Psoas muscle (tissue), 8 donors: ENCODE measurements at regions of chr5 and their contacts with region 1.

Region 1: DNA sequence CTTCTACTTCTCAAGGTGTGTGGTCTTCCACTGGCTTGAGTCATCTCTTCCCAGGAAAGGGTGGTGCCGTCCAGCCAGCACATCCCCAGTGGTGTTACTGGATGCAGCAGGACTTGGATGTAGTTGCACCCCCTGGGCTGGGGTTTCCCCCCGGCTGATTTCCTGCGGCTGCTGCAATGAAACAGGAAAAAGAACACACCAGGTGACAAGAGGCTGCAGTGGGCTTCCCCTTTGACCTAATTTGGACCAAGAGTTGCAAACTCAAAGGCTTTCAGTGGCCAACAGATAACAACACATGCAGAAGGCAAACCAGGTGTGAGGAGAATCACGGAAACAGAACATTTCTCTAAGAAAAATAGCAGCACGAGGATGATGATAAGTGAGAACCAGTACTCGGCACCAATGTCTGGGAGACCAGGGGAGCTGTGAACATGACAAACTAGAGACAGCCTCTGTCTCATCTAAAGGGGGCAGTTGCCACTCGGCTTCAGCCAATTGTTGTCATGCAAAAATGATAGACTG is 83.7 kb downstream of the PDE6A start:
- DNase-seq: no peak
- ATAC-seq: no peak
- H3K4me3 ChIP-seq: no peak overlapping the region
- H3K27ac ChIP-seq: no peak overlapping the region
- H3K4me1 ChIP-seq: peaks cover 19% of the 10 kb centered on the region
- H3K27me3 ChIP-seq: no peaks in the 10 kb centered on the region
- CTCF ChIP-seq: no peak

Region 2: DNA sequence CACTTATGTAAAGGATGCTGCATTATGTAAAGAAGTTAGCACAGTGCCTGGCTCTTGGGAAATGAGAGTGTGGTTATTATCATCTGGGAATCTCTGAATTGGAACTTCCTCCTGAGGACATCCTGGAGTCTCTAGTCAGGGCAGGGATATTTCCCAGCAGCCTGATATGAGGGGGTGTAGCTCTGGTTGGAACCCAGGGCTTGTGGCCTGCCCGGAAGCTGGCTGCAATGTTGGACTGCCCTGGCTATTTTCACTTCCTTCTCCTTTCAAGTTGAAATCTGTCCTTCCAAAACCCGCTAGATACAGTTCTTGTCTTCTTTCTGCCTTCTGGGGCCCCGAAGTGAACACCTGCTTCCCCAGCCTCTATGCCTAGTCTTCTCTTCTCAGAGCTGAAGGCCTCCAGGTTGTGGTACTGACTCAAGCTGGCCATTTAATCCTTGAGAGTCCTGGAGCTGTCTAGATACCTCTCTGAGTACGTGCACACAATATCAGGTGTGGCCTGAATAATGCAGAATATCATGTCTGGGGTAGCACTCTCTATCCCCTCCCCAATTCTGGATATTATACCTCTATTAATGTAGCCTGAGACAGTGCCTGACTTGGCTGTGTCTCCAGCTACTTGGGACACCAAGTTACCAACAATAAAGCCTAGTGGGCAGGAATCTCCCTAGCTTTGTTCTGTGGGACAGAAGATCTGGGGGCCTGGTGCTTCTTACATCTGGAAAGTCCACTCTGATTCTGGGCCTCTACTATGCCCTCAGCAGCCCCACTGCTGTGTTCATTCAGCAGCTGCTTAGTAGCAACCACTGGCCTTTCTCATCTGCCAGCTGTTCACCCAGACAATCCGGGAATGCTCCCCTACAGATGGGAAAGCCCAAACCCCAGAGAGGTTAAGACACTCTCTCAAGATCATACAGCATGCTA is 374.0 kb after region 1 on chr5:
- intact Hi-C with region 1: loop called in 1 of 2 experiments (anchors 10 kb)
- DNase-seq: no peak
- ATAC-seq: no peak
- H3K4me3 ChIP-seq: no peak overlapping the region
- H3K27ac ChIP-seq: no peak overlapping the region
- H3K4me1 ChIP-seq: no peaks in the 10 kb centered on the region
- H3K27me3 ChIP-seq: no peaks in the 10 kb centered on the region
- CTCF ChIP-seq: no peak